Endothelial cell of umbilical vein (primary cell): ENCODE measurements at regions of chr10 and their contacts with region 1.

Region 1: DNA sequence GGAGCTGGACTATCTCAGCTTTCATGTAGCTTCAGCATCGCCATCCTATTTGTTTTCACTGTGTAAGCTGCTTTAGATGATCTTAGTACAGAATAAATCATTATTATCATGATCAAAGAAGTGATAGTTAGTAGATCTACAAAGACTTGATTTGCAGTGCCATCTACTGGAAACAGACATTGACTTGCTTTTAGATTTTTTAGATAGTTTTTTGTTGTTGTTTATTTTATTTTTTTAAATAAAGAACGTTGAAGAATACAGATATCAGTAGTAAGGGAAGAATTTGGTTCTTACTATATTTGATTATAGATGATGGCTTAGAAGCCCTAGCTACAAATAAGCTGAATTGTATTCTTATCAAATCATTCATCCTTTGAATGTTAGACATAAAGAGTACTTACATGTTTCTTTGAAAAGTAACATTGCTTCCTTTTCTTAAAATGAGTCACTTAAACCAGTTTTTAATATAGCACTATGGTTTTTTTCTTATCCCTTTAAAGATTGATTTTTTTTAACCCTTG is 6.3 kb upstream of the SFMBT2 start:
- DNase-seq: peak; percentile 58
- H3K4me3 ChIP-seq: no peak overlapping the region
- H3K27ac ChIP-seq: no peak overlapping the region
- H3K4me1 ChIP-seq: no peaks in the 10 kb centered on the region
- H3K27me3 ChIP-seq: peaks cover 27 to 29% of the 10 kb centered on the region in 2 experiments
- CTCF ChIP-seq: peak in 1 of 2 donors; percentile 14
- POLR2A ChIP-seq: no peak

Region 2: DNA sequence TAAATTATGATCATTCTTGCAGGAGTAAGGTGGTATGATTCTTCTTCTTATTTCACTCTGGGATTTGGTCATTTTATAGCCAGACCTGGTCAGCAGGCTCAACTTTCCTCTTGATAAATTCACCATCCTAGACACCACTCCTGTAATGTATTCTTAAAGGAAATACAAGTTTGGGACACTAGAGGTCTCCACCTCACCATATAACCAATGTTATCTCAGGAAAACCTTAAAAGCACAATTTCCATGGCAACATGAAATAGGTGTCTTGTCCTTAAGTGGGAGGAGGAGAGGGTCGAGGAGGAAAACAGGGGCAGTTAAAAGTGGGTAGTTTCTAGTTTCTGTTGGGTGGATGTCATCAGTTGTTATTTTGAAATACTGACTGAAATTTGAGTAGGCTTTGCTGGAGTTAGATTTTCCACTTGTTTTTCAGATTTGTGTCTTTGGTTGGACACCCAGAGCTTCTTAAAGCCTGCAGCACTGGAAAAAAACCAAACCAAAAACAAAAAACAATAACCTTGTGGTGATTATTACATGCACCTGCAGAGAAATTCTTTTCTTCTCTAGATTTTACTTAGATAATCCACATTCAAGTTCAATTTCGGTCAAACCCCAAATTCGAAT is 1000.2 kb before region 1 on chr10:
- CTCF ChIA-PET with region 1: no interaction called
- POLR2A ChIA-PET with region 1: no interaction called
- dilution Hi-C with region 1: no loop called
- intact Hi-C with region 1: loop called (anchors 5 kb)
- DNase-seq: peak; percentile 71
- H3K4me3 ChIP-seq: no peak overlapping the region
- H3K27ac ChIP-seq: no peak overlapping the region
- H3K4me1 ChIP-seq: no peaks in the 10 kb centered on the region
- H3K27me3 ChIP-seq: peaks cover 6 to 7% of the 10 kb centered on the region in 2 experiments
- CTCF ChIP-seq: peak; percentile 39 to 44
- POLR2A ChIP-seq: no peak

Region 3: GRCh38 chr10:6786579-6787031 is 630.6 kb before region 1 on chr10:
- CTCF ChIA-PET with region 1: no interaction called
- POLR2A ChIA-PET with region 1: no interaction called
- dilution Hi-C with region 1: no loop called
- intact Hi-C with region 1: loop called (anchors 2 kb)
- DNase-seq: peak; percentile 76
- H3K4me3 ChIP-seq: no peak overlapping the region
- H3K27ac ChIP-seq: no peak overlapping the region
- H3K4me1 ChIP-seq: no peaks in the 10 kb centered on the region
- H3K27me3 ChIP-seq: peaks cover 3 to 10% of the 10 kb centered on the region in 2 experiments
- CTCF ChIP-seq: peak; percentile 35 to 46
- POLR2A ChIP-seq: no peak

Region 4: GRCh38 chr10:6920072-6921019 is 496.8 kb before region 1 on chr10:
- CTCF ChIA-PET with region 1: interaction called, 3 read pairs
- POLR2A ChIA-PET with region 1: no interaction called
- dilution Hi-C with region 1: no loop called
- intact Hi-C with region 1: loop called (anchors 1 kb)
- DNase-seq: peak; percentile 48
- H3K4me3 ChIP-seq: no peak overlapping the region
- H3K27ac ChIP-seq: no peak overlapping the region
- H3K4me1 ChIP-seq: peaks cover 5% of the 10 kb centered on the region
- H3K27me3 ChIP-seq: no peaks in the 10 kb centered on the region
- CTCF ChIP-seq: peak; percentile 46 to 70
- POLR2A ChIP-seq: no peak

Region 5: DNA sequence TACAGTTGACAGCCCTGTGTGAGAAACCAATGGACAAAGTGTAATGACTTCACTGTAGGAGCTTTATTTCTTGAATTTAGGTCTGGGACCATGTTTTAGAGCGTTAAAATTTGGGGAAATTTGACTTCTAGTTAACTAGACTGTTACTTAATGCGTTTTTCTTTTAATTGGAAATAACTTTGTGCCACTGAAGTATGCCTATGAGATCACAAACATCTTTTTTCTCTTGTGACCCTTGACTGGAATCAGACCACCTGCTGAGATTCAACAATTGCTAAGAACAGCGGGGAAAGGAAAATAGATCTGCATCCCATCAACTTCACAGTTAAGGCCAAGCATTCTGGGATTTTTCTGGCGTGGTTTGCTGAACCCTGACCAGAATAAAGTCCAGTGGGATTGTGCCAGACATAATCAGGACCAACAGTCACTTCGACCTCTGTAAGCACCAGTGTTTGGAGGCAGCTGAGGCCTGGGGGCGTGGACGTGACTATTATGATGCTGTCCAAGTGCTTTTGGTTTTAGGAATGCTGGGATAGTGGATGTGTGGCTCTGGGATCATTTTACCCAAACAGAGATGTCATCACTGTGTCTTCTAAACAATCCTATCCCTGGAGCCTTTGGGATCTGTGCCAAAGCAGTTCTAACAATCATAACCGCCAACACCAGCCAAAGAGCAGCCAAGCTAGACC is 463.9 kb before region 1 on chr10:
- CTCF ChIA-PET with region 1: no interaction called
- POLR2A ChIA-PET with region 1: no interaction called
- dilution Hi-C with region 1: no loop called
- intact Hi-C with region 1: no loop called
- DNase-seq: no peak
- H3K4me3 ChIP-seq: no peak overlapping the region
- H3K27ac ChIP-seq: no peak overlapping the region
- H3K4me1 ChIP-seq: no peaks in the 10 kb centered on the region
- H3K27me3 ChIP-seq: no peaks in the 10 kb centered on the region
- CTCF ChIP-seq: no peak
- POLR2A ChIP-seq: no peak

Region 6: GRCh38 chr10:7260412-7260900 is 156.7 kb before region 1 on chr10:
- CTCF ChIA-PET with region 1: no interaction called
- POLR2A ChIA-PET with region 1: no interaction called
- dilution Hi-C with region 1: no loop called
- intact Hi-C with region 1: loop called (anchors 1 kb)
- DNase-seq: peak; percentile 64
- H3K4me3 ChIP-seq: no peak overlapping the region
- H3K27ac ChIP-seq: no peak overlapping the region
- H3K4me1 ChIP-seq: peaks cover 10% of the 10 kb centered on the region
- H3K27me3 ChIP-seq: no peaks in the 10 kb centered on the region
- CTCF ChIP-seq: peak; percentile 46 to 57
- POLR2A ChIP-seq: no peak

Region 7: DNA sequence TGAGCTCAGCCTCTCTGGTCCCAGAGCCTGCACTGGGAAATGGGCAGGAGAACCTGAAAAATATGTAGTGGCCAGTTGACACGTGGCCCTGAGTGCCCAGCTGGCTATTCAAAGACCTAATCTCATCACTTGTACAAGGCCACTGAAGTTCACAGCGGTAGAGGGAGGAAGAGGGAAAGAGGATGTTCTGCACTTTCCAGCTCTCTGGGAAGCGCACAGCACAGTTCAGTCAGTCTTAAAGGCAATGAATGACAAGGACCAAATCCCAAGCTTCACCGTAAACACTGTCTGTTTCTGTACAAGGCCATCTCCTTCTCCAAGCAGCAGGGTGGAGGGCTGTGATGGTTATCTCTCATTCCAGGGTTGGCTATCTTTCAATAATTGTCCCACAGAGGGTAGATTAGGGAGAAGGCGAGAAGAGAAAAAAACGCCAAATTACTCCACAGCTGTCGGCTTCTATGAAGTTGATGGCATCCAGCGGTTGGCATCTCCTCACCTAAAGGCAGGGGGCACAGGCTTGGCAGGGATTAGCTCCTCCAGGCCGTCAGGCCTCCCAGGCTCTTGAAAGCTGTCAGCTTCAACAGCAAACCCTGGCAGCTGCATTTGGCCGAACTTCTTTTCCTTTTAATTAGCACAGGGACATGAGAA is 17.0 kb before region 1 on chr10:
- CTCF ChIA-PET with region 1: no interaction called
- POLR2A ChIA-PET with region 1: no interaction called
- dilution Hi-C with region 1: no loop called
- intact Hi-C with region 1: no loop called
- DNase-seq: no peak
- H3K4me3 ChIP-seq: no peak overlapping the region
- H3K27ac ChIP-seq: no peak overlapping the region
- H3K4me1 ChIP-seq: no peaks in the 10 kb centered on the region
- H3K27me3 ChIP-seq: no peaks in the 10 kb centered on the region
- CTCF ChIP-seq: no peak
- POLR2A ChIP-seq: no peak